ENCODE measurements at regions of chr2 and their contacts with region 1.

Region 1: DNA sequence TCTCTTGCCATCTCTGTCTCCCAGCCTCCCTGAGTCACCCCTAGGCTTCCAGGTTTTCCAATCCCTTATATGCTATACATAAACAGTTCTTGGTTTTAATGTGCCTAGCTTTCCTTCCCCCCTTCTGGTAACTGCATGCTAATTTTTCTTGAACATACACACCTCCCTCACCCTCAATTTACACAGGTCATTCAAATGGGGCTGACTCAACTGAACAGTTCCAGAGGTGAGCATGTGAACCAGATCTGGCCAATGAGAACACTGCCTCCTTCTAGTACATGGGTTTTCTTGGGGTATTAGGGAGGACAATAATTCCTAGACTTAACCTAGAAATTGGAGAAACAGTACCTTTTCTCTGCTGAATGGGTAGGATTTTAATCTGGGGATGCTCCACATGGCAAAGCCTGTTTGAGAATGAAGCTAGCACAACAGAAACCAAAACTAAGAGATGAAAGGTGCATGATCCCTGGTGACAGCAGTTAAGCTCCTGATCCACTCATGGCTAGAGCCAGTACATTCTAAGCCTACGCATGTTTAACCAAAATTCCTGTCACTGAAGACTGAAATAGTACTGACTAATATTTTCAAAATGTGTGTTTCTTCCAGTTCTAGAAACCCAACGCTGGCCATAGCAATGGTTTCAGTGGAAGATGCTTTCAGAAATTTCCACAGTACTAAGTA is 11.8 kb downstream of the SLC25A12 start:
- DNase-seq: no peak
- ATAC-seq: no peak

Region 2: GRCh38 chr2:171902840-171903420 is 20.7 kb after region 1 on chr2:
- intact Hi-C with region 1: loop called (anchors 2 kb)
- DNase-seq: no peak
- ATAC-seq: no peak

Region 3: GRCh38 chr2:172606285-172606684 is 724.1 kb after region 1 on chr2:
- intact Hi-C with region 1: no loop called
- DNase-seq: no peak
- ATAC-seq: no peak

Region 4: DNA sequence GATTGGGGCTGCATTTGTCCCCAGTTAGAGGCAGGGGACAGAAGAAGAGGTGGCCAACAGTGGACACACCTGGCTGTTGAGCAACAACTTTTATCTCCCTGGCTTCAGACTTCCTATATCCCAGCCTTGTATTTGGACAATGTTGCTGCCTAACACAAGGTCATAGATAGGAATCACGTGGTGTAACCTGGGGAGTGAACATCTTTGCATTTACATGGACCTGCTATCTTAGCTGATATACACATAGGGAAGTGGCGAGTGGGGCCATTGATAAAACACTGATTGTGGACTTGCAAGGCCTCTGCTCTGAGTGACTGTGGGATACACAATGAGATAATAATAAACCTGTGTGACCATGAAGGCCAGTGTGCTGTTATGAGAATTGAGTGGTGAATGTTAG is 880.3 kb after region 1 on chr2:
- intact Hi-C with region 1: no loop called
- DNase-seq: no peak
- ATAC-seq: no peak

Measured in sciatic nerve (tissue), 2 donors.